HCT116 (cell line): ENCODE measurements at regions of chr20 and their contacts with region 1.

Region 1: GRCh38 chr20:1952737-1953530 is 40.9 kb downstream of the PDYN start:
- DNase-seq: no peak
- ATAC-seq: no peak
- H3K4me3 ChIP-seq: no peak overlapping the region
- H3K27ac ChIP-seq: no peak overlapping the region
- H3K4me1 ChIP-seq: no peaks in the 10 kb centered on the region
- H3K27me3 ChIP-seq: no peaks in the 10 kb centered on the region
- CTCF ChIP-seq: no peak
- POLR2A ChIP-seq: no peak
- RAD21 ChIP-seq: no peak

Region 2: GRCh38 chr20:2246069-2246491 is 293.1 kb after region 1 on chr20:
- CTCF ChIA-PET with region 1: no interaction called
- POLR2A ChIA-PET with region 1: no interaction called
- RAD21 ChIA-PET with region 1: no interaction called
- intact Hi-C with region 1: no loop called
- DNase-seq: no peak
- ATAC-seq: no peak
- H3K4me3 ChIP-seq: no peak overlapping the region
- H3K27ac ChIP-seq: no peak overlapping the region
- H3K4me1 ChIP-seq: peaks cover 4 to 5% of the 10 kb centered on the region in 2 experiments; a peak in 1 of 4 replicates
- H3K27me3 ChIP-seq: peaks cover 6% of the 10 kb centered on the region; the same call in 1 of the 2 replicates
- CTCF ChIP-seq: no peak
- POLR2A ChIP-seq: no peak
- RAD21 ChIP-seq: no peak

Region 3: DNA sequence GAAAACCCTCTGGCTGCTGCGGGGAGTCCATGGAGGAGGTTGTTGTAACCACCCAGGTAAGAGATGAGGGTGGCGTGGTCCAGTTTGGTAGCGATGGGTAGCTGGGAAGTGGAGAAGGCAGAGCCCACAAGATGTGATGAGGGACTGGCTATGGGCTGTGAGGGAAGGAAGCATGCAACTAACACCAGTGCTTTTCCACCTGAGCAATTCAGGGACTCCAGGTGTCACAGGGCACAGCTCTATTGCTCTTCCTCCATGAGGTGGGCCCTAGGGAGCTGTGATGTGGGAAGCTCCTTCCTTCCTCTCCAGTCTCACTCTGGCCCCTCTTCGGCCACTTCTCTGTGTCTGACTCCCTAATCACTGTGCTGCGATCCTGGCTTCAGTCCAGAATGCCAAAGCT is 395.4 kb after region 1 on chr20:
- CTCF ChIA-PET with region 1: no interaction called
- POLR2A ChIA-PET with region 1: no interaction called
- RAD21 ChIA-PET with region 1: interaction called in 1 of 2 experiments, 12 read pairs
- intact Hi-C with region 1: no loop called
- DNase-seq: no peak
- ATAC-seq: no peak
- H3K4me3 ChIP-seq: no peak overlapping the region
- H3K27ac ChIP-seq: no peak overlapping the region
- H3K4me1 ChIP-seq: peaks cover 6 to 16% of the 10 kb centered on the region in 2 experiments; a peak in 3 of 4 replicates
- H3K27me3 ChIP-seq: no peaks in the 10 kb centered on the region
- CTCF ChIP-seq: no peak
- POLR2A ChIP-seq: no peak
- RAD21 ChIP-seq: no peak